Mammary epithelial cell (primary cell): ENCODE measurements at regions of chr1 and their contacts with region 1.

Region 1: DNA sequence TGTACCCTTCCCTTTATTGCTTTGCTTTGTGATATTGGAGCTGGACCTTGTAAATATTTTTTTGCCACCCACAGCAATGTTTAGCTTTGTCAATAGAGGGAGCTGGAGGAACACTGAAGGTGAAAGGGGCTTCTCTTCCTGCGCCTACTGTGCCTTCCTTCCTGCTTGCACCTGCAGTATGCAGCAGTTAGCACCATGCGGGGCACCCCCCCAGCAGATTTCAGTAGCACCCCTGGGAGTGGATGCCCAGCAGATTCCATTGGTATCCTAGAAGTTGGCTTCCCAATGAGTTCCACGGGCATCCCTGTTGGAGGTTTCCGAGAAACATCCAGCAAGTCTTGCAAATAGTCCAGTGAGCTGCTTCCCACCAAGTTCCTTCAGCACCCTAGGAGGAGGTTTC is 25.6 kb downstream of the S100A10 start:
- DNase-seq: peak; percentile 52
- H3K4me3 ChIP-seq: no peak overlapping the region
- H3K27ac ChIP-seq: no peak overlapping the region
- H3K4me1 ChIP-seq: peaks cover 65% of the 10 kb centered on the region
- H3K27me3 ChIP-seq: no peaks in the 10 kb centered on the region
- CTCF ChIP-seq: peak; percentile 87 to 90

Region 2: GRCh38 chr1:151945725-151946364 is 22.2 kb before region 1 on chr1:
- CTCF ChIA-PET with region 1: interaction called, 5 read pairs
- dilution Hi-C with region 1: no loop called
- in situ Hi-C with region 1: no loop called
- intact Hi-C with region 1: loop called (anchors 1 kb)
- DNase-seq: peak; percentile 98
- H3K4me3 ChIP-seq: peak overlapping the region in 2 of 3 experiments; percentile 5 to 11
- H3K27ac ChIP-seq: peak overlapping the region; percentile 99
- H3K4me1 ChIP-seq: peaks cover 47% of the 10 kb centered on the region
- H3K27me3 ChIP-seq: no peaks in the 10 kb centered on the region
- CTCF ChIP-seq: no peak

Region 3: GRCh38 chr1:152013664-152014237 is 45.7 kb after region 1 on chr1:
- CTCF ChIA-PET with region 1: no interaction called
- dilution Hi-C with region 1: no loop called
- in situ Hi-C with region 1: no loop called
- intact Hi-C with region 1: loop called (anchors 1 kb)
- DNase-seq: no peak
- H3K4me3 ChIP-seq: no peak overlapping the region
- H3K27ac ChIP-seq: no peak overlapping the region
- H3K4me1 ChIP-seq: peaks cover 25% of the 10 kb centered on the region
- H3K27me3 ChIP-seq: no peaks in the 10 kb centered on the region
- CTCF ChIP-seq: peak; percentile 82 to 86

Region 4: DNA sequence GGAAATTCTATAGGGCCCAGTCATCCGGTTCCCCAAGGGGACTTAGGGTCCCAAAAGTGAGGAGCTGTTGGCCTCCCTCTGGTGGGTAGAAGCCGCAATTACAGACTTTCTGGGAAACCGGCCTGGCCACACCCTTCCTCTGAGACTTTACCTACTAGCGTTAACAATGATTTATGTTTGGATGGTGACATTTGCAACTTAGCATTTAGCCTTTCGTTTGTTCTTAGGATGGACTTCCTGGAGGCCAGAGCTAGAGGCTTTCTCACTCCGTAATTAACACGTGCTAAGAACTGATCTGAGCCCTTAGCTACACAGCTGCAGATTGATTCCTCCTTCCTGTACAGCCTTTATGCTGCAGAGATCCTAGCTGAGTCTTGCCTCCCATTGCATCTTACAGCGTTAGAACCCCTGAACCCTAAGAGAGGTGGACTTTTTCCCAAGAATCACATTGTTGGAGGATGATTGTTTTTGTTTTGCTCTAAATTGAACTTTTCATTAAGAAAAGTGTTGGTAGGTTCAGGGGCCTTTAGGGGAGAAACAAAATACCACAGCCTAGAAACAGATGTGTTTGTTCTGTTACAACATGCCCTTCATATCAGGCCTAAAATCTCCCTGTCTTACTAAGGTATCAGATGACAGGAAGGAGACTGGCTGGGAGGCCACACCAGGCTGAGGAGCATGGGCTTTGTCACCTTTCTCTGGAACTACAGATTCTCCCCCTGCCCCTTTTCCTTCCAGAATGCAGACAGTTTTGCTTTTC is 66.8 kb after region 1 on chr1:
- CTCF ChIA-PET with region 1: interaction called, 4 read pairs
- dilution Hi-C with region 1: no loop called
- in situ Hi-C with region 1: no loop called
- intact Hi-C with region 1: loop called (anchors 1 kb)
- DNase-seq: peak; percentile 82
- H3K4me3 ChIP-seq: peak overlapping the region; percentile 90 to 99 (median 95)
- H3K27ac ChIP-seq: peak overlapping the region; percentile 95
- H3K4me1 ChIP-seq: peaks cover 23% of the 10 kb centered on the region
- H3K27me3 ChIP-seq: no peaks in the 10 kb centered on the region
- CTCF ChIP-seq: peak; percentile 71 to 81